Posterior cingulate gyrus (tissue), 11 donors: ENCODE measurements at regions of chr5 and their contacts with region 1.

Region 1: GRCh38 chr5:43313035-43313853 is at the start of gene HMGCS1:
- DNase-seq: peak; percentile 97 to 100 (median 99)

Region 2: GRCh38 chr5:42798284-42799240 is 514.7 kb before region 1 on chr5:
- intact Hi-C with region 1: no loop called
- DNase-seq: no peak

Region 3: GRCh38 chr5:43120720-43121564 is 192.3 kb before region 1 on chr5 and contains the start of gene ZNF131:
- intact Hi-C with region 1: loop called (anchors 1 kb)
- DNase-seq: peak; percentile 90 to 100 (median 95)

Region 4: GRCh38 chr5:43191740-43192557 is 121.3 kb before region 1 on chr5 and contains the start of gene NIM1K:
- intact Hi-C with region 1: loop called (anchors 5 kb)
- DNase-seq: peak; percentile 83 to 98 (median 90)

Region 5: DNA sequence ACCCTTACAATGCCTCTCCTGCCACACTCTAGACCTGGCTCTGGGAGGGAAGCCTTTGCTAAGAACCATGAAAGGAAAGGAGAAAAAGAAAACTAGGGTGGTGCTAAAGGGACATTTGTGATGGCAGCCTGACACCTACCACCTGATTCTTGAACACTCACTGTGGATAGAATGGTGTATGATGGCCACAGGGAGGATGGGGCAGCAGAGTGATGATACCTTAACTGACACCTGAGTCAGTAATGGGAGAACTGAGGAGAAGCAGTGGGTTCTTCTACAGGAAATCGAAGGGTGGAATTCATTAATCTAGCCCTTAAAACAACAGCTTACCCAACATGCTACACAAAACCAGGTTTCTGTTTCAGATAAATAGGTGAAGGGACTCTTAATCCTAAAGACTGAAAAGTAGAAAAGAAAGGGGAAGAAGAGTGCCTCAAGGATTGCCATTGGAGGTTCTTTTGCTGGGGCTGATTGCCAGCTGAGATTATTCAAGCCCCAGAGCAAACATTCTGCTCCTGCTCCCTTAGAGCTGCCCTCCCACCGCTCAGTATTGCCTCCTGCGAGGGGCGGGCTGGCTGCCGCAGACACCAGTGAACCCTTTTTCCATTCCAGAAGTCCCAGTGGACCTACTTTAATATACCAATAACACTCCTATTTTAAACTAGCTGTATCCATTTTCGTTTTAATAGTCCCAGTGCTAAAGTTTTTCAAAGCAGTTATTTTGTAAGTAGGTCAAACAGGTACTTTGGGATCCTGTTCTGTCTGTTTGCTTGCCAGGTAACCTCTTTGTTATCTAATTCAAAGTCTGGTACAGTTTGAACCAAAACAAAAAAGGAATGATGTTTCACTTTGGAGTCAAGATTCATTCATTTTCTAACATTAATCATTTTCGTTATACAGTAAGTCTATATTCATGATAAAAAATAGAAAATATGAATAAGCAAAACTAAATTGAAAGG is 38.8 kb before region 1 on chr5:
- intact Hi-C with region 1: no loop called
- DNase-seq: no peak

Region 6: DNA sequence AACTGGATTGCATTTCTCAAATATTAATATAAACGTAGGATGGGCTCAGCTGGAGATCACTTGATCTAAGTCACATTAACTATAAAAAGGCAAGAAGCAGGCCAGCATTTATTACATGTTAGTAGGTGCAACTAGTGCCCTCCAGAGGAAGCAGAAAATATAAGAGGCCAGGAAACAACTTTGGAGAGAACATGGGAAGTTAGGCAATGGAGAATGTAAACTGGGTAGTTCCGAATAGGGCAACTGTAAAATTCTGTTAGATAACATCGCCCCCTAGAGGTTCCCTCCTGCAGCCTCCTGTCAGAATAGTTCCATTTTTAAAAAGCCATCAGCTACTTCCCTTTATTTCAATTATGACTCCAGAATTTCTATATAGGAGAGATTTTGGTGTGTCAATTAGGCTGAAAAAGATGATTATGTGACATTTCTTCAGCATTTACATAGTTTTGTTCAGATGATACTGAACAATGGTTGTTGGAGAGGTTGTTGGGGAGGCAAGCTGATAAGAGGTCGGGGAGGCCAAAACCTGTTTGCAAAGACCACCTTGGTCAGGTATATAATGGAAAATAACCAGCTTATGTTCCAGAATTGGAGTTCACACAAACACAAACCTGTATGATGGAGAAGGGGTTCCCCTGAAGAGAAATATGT is 76.6 kb after region 1 on chr5:
- intact Hi-C with region 1: loop called (anchors 10 kb)
- DNase-seq: peak in 5 of 10 donors; percentile 25 to 56 (median 38)

Region 7: GRCh38 chr5:43556857-43557542 is 243.8 kb after region 1 on chr5 and contains the start of gene PAIP1:
- intact Hi-C with region 1: loop called (anchors 10 kb)
- DNase-seq: peak; percentile 60 to 96 (median 72)

Region 8: GRCh38 chr5:43616535-43616934 is 303.3 kb after region 1 on chr5:
- intact Hi-C with region 1: no loop called
- DNase-seq: no peak